ENCODE measurements at regions of chr10 and their contacts with region 1.

Region 1: DNA sequence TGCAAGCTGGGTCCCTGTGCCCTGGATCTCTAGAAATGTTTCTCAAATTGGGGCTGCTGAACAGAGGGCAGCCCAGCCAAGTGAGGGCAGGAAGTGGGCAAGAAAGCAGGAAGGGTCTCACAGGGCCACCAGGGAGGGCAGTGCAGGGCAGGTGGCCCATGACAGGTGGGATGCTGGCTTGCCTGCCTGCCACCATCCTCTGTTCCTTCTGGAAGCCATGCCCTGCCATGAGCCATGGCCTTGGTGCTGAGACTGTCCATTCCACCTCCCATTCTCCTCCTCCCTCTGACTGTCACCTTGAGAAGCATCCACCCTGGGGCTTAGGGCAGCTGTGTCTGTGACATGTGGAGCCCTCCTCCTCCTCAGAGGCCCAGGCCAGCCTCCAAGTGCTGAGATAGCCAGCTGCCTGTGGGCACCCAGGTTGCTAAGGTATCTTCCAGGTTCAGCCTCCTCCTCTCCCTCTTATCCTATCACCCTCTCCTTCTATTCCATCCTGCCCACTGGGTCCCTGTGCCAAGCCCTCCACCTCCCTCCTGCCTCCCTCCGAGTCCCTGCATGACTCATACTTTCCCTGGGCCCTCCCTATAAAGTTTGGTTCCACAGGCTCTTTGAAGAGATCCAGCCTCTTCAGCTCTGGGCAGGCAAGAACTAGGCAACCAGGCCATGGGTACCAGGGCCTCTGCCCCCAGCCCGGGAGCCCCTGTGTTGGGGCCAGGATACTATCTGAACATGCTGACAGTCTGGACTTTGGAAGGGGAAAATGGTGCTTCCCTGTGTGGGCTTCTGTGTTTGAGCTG is 1.3 kb downstream of the VSIR start:
- DNase-seq: peak; percentile 91 to 92
- ATAC-seq: peak; percentile 74
- H3K4me3 ChIP-seq: no peak overlapping the region
- H3K27ac ChIP-seq: peak overlapping the region; percentile 71 to 98
- H3K4me1 ChIP-seq: peaks cover 0 to 8% of the 10 kb centered on the region in 2 donors
- H3K27me3 ChIP-seq: no peaks in the 10 kb centered on the region

Region 2: DNA sequence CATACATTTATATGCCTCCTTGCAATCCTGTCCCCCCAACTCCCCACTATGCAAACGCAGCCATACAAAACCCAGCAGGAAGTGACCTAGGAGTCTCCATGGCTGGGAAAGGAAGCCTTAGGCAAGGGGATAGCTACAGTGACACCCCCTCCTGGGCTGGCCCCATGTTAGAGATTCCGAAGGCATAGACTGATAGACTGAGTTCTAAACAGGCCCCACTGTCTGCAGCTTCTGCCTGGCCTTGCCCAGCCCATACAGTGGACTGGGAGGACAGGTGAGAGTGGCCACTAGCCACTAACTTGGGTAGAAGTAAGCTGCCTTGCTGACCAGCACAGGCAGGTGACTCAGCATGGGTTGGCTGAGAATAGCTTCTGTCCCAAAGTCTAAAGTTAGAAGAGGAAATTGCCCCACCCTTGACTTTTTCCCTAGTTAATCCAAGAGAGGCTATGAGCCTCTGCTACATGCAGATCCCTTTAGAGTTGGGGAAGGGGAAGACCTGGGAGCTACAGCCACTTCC is 158.7 kb before region 1 on chr10:
- intact Hi-C with region 1: loop called in 1 of 2 experiments (anchors 5 kb)
- DNase-seq: no peak
- ATAC-seq: no peak
- H3K4me3 ChIP-seq: no peak overlapping the region
- H3K27ac ChIP-seq: no peak overlapping the region
- H3K4me1 ChIP-seq: no peaks in the 10 kb centered on the region
- H3K27me3 ChIP-seq: no peaks in the 10 kb centered on the region

Region 3: DNA sequence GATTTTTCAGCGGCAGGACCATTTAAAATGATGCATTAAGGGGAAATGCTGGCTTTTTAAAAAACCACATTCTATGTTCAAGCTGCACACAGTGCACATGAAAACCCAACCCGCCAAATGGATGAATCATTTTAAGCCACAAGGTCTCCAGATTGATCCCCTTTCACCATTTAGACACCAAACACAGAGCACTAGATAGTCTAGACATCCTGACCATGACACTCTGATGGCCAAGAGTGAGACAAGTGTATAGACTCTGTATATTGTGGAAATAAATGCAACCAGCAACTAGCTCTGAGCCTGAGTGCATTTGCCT is 50.4 kb after region 1 on chr10:
- intact Hi-C with region 1: no loop called
- DNase-seq: peak in 1 of 2 donors; percentile 5
- ATAC-seq: no peak
- H3K4me3 ChIP-seq: no peak overlapping the region
- H3K27ac ChIP-seq: no peak overlapping the region
- H3K4me1 ChIP-seq: no peaks in the 10 kb centered on the region
- H3K27me3 ChIP-seq: no peaks in the 10 kb centered on the region